Activated CD4-positive, alpha-beta memory T cell treated with anti-CD3 and anti-CD28 coated beads for 36 hours (primary cell): ENCODE measurements at regions of chr9 and their contacts with region 1.

Region 1: DNA sequence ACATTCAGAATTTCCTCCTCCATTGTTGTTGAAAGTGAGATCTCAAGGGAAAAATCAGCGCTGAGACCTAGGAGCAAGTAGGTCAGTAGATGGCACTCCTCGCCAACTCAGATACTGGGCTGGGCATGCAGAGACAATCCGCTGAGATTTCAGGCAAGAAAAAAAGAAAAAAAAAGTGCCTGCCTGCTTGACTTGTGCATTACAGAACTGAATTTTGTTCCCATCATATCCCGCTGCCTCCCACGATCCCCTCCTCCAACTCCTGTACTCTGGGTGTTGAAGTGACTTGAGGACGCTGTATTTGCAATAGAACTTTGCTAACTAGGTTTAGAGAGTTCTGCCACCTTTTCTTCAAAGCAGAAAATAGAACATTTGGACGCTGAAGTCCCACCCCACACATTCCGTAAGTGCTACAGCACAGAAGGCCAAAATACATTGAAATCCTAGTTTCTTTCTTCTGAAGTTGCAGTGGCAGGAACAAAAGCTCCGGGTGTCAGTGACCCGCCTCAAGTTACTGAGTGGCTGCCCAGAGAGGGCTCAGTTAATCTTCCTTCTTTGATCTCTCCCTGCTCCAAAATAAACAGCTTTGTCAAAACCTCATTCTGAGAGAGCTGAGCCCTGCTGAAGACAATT is 265.8 kb downstream of the MLLT3 start:
- DNase-seq: peak; percentile 72
- H3K4me3 Mint-ChIP-seq: no peak overlapping the region
- H3K27ac Mint-ChIP-seq: no peak overlapping the region
- H3K4me1 Mint-ChIP-seq: peaks cover 61% of the 10 kb centered on the region
- H3K27me3 Mint-ChIP-seq: no peaks in the 10 kb centered on the region

Region 2: DNA sequence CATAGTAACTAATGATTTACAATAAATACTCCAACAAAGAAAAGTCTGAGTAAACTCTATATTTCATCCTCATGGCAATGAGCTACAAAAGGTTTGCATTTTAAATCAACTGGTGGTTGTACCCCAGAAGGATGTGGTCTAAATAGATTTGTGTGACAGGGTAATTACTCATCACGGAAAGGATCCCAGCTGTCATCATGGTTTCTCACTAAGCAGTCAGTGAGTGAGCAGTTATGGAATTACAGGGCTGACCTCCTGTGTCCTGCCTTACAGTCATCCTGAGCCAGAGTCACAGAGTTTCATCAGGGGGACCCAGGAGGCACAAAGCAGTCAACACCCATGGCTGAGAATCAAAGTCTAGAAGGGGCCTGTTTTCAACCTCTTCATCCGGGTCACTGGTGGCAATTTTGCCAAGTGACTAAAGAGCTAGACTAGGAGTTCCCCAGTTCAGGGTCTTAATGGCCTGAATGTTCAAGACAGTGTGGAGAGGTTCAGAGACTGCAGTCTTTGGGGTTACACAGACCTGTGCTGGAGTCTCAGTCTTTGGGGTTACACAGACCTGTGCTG is 356.9 kb before region 1 on chr9:
- CTCF ChIA-PET with region 1: no interaction called
- POLR2A ChIA-PET with region 1: interaction called, 3 read pairs
- intact Hi-C with region 1: loop called (anchors 1 kb)
- DNase-seq: peak; percentile 85
- H3K4me3 Mint-ChIP-seq: no peak overlapping the region
- H3K27ac Mint-ChIP-seq: peak overlapping the region; percentile 88
- H3K4me1 Mint-ChIP-seq: peaks cover 49% of the 10 kb centered on the region
- H3K27me3 Mint-ChIP-seq: peaks cover 1% of the 10 kb centered on the region

Region 3: GRCh38 chr9:20331095-20331685 is 25.3 kb before region 1 on chr9:
- CTCF ChIA-PET with region 1: no interaction called
- POLR2A ChIA-PET with region 1: no interaction called
- intact Hi-C with region 1: loop called (anchors 1 kb)
- DNase-seq: peak; percentile 37
- H3K4me3 Mint-ChIP-seq: no peak overlapping the region
- H3K27ac Mint-ChIP-seq: peak overlapping the region; percentile 63
- H3K4me1 Mint-ChIP-seq: peaks cover 20% of the 10 kb centered on the region
- H3K27me3 Mint-ChIP-seq: no peaks in the 10 kb centered on the region

Region 4: GRCh38 chr9:20684035-20684872 is 327.7 kb after region 1 on chr9 and contains the start of gene FOCAD:
- CTCF ChIA-PET with region 1: no interaction called
- POLR2A ChIA-PET with region 1: interaction called, 4 read pairs
- intact Hi-C with region 1: loop called (anchors 1 kb)
- DNase-seq: peak; percentile 97
- H3K4me3 Mint-ChIP-seq: peak within 1 kb of the TSS; percentile 83
- H3K27ac Mint-ChIP-seq: peak within 1 kb of the TSS; percentile 85
- H3K4me1 Mint-ChIP-seq: peaks cover 22% of the 10 kb centered on the region
- H3K27me3 Mint-ChIP-seq: no peaks in the 10 kb centered on the region
- total RNA-seq, gene FOCAD: 35.4 to 37.1 TPM

Region 5: DNA sequence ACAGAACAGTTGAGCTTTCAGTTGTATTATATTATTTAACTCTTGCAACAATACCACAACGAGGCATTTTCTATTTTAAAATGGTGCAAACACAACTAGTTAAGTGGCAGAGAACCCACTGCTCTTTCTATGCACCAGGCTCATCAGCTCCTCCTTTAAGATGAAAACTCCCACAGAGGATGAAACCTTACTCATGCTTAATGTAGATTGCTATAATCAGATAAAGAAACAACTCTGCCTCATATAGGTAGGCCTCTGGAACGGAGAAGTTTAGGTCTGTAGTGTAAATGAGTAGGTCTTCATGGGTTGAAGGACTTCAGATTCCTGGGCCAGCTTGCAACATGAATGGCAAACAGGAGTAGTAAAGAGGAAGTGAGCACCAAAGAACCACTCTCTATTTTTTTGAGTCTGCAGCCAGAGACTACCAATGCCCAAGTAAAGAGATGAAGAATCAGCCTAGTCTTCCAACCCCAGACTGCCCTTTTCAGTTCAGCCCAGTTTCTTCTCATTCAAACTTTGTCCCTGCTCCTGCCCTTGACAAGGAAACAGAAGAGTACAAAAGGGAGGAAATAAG is 641.1 kb after region 1 on chr9:
- CTCF ChIA-PET with region 1: no interaction called
- POLR2A ChIA-PET with region 1: no interaction called
- intact Hi-C with region 1: loop called (anchors 5 kb)
- DNase-seq: peak; percentile 17
- H3K4me3 Mint-ChIP-seq: no peak overlapping the region
- H3K27ac Mint-ChIP-seq: peak overlapping the region; percentile 49
- H3K4me1 Mint-ChIP-seq: peaks cover 46% of the 10 kb centered on the region
- H3K27me3 Mint-ChIP-seq: no peaks in the 10 kb centered on the region

Region 6: GRCh38 chr9:21110708-21111576 is 754.4 kb after region 1 on chr9:
- CTCF ChIA-PET with region 1: interaction called, 4 read pairs
- POLR2A ChIA-PET with region 1: no interaction called
- intact Hi-C with region 1: loop called (anchors 1 kb)
- DNase-seq: no peak
- H3K4me3 Mint-ChIP-seq: no peak overlapping the region
- H3K27ac Mint-ChIP-seq: no peak overlapping the region
- H3K4me1 Mint-ChIP-seq: no peaks in the 10 kb centered on the region
- H3K27me3 Mint-ChIP-seq: no peaks in the 10 kb centered on the region